Aorta (tissue), 5 donors: ENCODE measurements at regions of chr10 and their contacts with region 1.

Region 1: GRCh38 chr10:31318854-31319601 is at the start of gene ZEB1:
- DNase-seq: peak; percentile 91 to 92
- ATAC-seq: peak; percentile 90
- H3K4me3 ChIP-seq: peak within 1 kb of the TSS; percentile 90 to 93
- H3K27ac ChIP-seq: peak within 1 kb of the TSS; percentile 80 to 89
- H3K4me1 ChIP-seq: no peaks in the 10 kb centered on the region
- H3K27me3 ChIP-seq: no peaks in the 10 kb centered on the region
- total RNA-seq, gene ZEB1: 187 to 214 TPM

Region 2: DNA sequence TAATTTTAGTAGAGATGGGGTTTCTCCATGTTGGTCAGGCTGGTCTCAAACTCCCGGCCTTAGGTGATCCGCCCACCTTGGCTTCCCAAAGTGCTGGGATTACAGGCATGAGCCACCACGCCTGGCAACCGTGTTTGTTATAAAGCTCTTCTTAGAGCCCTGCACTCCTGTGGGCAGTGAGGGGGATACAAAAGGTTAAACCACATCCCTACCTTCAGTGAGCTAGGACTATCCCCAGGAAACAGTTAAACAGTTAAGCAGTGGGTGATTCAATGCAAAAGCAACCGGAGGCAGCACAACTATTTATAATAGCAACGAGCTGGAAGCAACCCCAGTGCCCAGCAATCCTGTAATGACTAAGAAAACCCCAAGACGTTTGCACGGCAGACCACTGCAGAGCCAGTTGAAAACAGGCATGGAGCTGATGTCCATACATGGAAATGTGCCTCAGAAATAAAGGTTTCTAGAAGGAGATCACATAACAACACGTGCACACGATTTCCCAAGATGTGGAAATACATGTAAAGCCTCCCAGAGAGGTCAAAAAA is 582.3 kb before region 1 on chr10:
- intact Hi-C with region 1: loop called in 1 of 2 experiments (anchors 5 kb)
- DNase-seq: peak; percentile 81 to 84
- ATAC-seq: peak; percentile 84
- H3K4me3 ChIP-seq: no peak overlapping the region
- H3K27ac ChIP-seq: peak overlapping the region in 1 of 2 donors; percentile 12
- H3K4me1 ChIP-seq: peaks cover 0 to 3% of the 10 kb centered on the region in 2 donors
- H3K27me3 ChIP-seq: no peaks in the 10 kb centered on the region

Region 3: DNA sequence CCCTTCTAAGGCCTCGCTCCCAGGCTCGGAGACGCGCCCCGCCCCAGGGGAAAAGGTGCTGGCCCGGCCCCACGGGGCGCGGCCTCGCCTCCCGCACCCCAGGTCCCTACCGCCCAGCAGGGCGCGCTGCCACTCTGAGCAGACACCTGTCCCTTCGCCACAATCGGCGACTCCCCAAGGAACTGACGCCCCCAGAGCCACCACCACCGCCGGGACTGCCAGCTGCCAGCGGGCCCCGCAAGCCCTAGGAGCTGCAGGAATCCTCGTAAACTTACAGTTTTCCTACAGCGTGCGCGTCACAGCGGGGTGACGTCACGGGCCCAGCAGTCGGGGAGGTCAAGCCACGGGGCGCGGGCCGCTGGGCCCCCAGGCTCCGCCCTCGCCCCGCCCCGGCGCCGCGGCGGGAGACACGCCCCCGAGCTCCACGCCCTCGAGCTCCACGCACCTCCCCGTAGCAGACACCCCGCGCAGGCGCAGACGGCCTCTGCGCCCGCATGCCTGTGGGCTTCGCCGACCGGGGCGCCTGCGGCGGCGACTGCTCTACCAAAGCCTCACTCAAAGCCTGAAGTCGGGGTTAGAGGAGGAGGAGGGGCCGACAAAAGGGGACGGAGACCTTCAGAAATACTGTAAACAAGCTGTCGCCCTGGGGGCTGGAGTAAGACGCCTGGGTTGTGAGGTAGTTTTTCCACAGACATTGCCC is 287.3 kb before region 1 on chr10 and contains the start of gene ZNF438:
- intact Hi-C with region 1: loop called (anchors 5 kb)
- DNase-seq: peak; percentile 97 to 99
- ATAC-seq: peak; percentile 98
- H3K4me3 ChIP-seq: peak within 1 kb of the TSS; percentile 28 to 47
- H3K27ac ChIP-seq: peak within 1 kb of the TSS; percentile 95 to 97
- H3K4me1 ChIP-seq: peaks cover 2 to 4% of the 10 kb centered on the region in 2 donors
- H3K27me3 ChIP-seq: no peaks in the 10 kb centered on the region
- total RNA-seq, gene ZNF438: 11.6 to 16.5 TPM

Region 4: GRCh38 chr10:31399631-31400030 is 80.6 kb after region 1 on chr10:
- intact Hi-C with region 1: loop called in 1 of 2 experiments (anchors 10 kb)
- DNase-seq: peak in 1 of 2 donors; percentile 52
- ATAC-seq: peak; percentile 81
- H3K4me3 ChIP-seq: no peak overlapping the region
- H3K27ac ChIP-seq: no peak overlapping the region
- H3K4me1 ChIP-seq: peaks cover 2 to 5% of the 10 kb centered on the region in 2 donors
- H3K27me3 ChIP-seq: no peaks in the 10 kb centered on the region

Region 5: GRCh38 chr10:31603235-31604087 is 284.4 kb after region 1 on chr10:
- intact Hi-C with region 1: loop called in 1 of 2 experiments (anchors 10 kb)
- DNase-seq: peak; percentile 98 to 99
- ATAC-seq: peak; percentile 96
- H3K4me3 ChIP-seq: peak overlapping the region; percentile 13 to 35
- H3K27ac ChIP-seq: peak overlapping the region in 1 of 2 donors; percentile 22
- H3K4me1 ChIP-seq: no peaks in the 10 kb centered on the region
- H3K27me3 ChIP-seq: no peaks in the 10 kb centered on the region

Region 6: DNA sequence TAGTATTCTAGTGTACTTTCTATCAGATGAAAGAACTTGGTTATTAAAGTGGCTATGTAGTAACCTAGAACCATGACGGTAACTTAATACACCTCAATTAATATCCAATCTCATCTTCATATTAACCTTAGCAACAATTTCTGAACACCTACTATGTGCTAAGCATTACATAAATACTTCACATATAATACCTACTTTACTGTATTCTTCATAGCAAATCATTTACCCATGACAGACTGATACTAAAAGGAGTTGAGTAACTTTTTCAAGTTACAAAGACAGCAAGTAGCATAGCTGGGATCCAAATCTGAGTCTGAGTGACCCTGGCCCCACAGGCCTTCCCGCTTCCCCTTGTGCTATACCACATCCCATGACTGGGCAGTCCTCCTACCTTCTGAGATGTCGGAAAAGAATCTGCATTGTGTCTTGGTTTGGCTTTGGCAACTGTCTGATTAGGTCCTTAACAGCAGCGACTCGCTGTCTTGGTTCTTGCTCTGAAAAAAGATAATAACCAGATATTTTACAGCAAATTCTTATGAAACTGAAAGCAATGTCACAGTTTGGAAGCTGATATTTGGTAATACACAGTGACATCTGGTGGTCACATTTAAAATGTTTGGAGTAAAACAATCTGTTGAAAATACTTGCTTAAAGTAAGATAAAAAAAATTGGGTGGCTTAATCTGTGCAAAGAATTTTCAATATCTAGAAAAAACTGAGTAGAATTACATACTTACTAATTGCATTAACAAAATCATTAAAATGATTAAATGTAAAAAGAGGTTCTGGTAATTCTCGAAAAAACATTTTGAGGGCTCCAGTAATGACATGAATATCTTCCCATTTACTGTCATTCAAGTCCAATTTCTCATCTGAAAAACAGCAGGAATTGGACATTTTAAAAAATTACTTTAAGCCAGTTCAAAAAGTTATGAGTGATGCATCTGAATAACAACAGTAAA is 489.5 kb after region 1 on chr10:
- intact Hi-C with region 1: loop called in 1 of 2 experiments (anchors 10 kb)
- DNase-seq: peak in 1 of 2 donors; percentile 64
- ATAC-seq: peak; percentile 80
- H3K4me3 ChIP-seq: no peak overlapping the region
- H3K27ac ChIP-seq: no peak overlapping the region
- H3K4me1 ChIP-seq: no peaks in the 10 kb centered on the region
- H3K27me3 ChIP-seq: no peaks in the 10 kb centered on the region